PC-3 (cell line): ENCODE measurements at regions of chr5 and their contacts with region 1.

Region 1: DNA sequence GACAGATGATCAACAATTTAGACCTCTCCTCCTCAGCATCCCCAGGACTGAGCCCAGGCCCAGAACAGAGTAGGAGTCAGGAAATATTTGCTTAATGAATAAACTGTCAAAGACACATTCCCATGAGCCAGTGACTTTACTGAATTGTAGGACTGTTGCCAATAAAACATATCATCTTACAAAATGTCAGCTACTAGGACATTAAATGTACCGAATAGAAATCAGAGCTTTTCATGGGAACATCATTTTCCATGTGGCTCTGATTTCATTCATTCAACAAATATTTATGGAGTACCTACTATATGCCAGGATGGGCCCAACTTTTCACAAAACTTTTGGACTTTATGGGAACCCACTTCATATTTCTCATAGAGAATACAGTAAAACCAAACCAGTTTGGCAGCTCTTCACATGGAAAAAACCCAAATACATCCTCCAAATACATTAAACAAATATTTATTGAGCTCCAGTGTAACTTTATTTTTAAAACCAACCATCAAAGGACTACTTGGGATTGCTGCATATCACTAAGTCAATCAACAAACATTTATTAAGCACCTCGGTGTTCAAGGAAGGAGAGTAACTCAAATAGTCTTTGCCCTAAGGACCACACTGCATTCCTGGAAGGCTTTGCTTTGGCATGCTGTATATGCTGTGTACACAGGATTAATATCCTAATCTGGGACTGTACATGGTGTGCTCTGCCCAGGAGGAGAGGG is 11.4 kb downstream of the VDAC1 start:
- DNase-seq: peak; percentile 82
- ATAC-seq: peak; percentile 94
- H3K4me3 ChIP-seq: no peak overlapping the region
- H3K27ac ChIP-seq: peak overlapping the region; percentile 77
- H3K4me1 ChIP-seq: peaks cover 39% of the 10 kb centered on the region
- H3K27me3 ChIP-seq: no peaks in the 10 kb centered on the region
- CTCF ChIP-seq: no peak

Region 2: GRCh38 chr5:133968049-133968980 is 25.1 kb before region 1 on chr5 and contains the start of gene C5orf15:
- CTCF ChIA-PET with region 1: no interaction called
- POLR2A ChIA-PET with region 1: no interaction called
- intact Hi-C with region 1: loop called (anchors 1 kb)
- DNase-seq: peak; percentile 95
- ATAC-seq: peak; percentile 97
- H3K4me3 ChIP-seq: peak within 1 kb of the TSS; percentile 90
- H3K27ac ChIP-seq: peak within 1 kb of the TSS; percentile 39
- H3K4me1 ChIP-seq: peaks cover 11% of the 10 kb centered on the region
- H3K27me3 ChIP-seq: no peaks in the 10 kb centered on the region
- CTCF ChIP-seq: no peak
- total RNA-seq, gene C5orf15: 22.7 and 45.2 TPM in 2 replicates